Calu3 (cell line): ENCODE measurements at regions of chr2 and their contacts with region 1.

Region 1: GRCh38 chr2:152189622-152190495 is 14.3 kb upstream of the STAM2 start:
- DNase-seq: peak; percentile 55
- H3K4me3 Mint-ChIP-seq: no peak overlapping the region
- H3K27ac Mint-ChIP-seq: no peak overlapping the region
- H3K4me1 Mint-ChIP-seq: peaks cover 9% of the 10 kb centered on the region
- H3K27me3 Mint-ChIP-seq: no peaks in the 10 kb centered on the region
- CTCF ChIP-seq: peak; percentile 41

Region 2: GRCh38 chr2:152485954-152486736 is 296.3 kb after region 1 on chr2:
- CTCF ChIA-PET with region 1: no interaction called
- intact Hi-C with region 1: loop called (anchors 5 kb)
- DNase-seq: peak; percentile 52
- H3K4me3 Mint-ChIP-seq: peak overlapping the region; percentile 13
- H3K27ac Mint-ChIP-seq: peak overlapping the region; percentile 60
- H3K4me1 Mint-ChIP-seq: peaks cover 65% of the 10 kb centered on the region
- H3K27me3 Mint-ChIP-seq: no peaks in the 10 kb centered on the region
- CTCF ChIP-seq: no peak

Region 3: DNA sequence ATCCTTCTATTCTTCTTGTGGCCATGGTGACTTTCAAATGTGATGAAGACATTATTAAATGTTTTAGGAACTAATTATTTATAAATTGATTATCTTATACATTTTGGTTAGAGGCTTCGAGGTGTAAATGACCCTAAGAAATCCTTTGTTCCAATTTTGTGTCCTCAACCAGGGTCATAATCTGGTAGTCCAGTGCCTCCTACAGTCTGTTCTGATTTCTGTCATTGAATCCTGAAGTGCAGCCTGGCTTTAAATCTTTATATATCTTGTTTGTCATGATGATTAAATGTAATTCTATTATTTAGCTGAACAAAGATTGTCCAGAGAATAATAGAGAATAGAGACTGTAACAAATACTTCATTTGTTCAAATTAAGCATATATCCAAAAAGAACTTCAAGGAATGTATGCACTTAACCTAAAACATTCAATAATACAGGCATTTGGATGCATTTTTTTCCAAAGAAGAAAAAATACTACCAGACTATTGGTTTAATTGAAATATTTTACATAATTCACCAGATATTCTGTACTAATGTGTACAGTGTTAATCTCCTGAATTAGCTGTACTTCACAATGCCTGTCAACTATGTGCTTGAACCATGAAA is 437.6 kb after region 1 on chr2:
- CTCF ChIA-PET with region 1: no interaction called
- intact Hi-C with region 1: loop called (anchors 2 kb)
- DNase-seq: peak; percentile 21
- H3K4me3 Mint-ChIP-seq: no peak overlapping the region
- H3K27ac Mint-ChIP-seq: no peak overlapping the region
- H3K4me1 Mint-ChIP-seq: no peaks in the 10 kb centered on the region
- H3K27me3 Mint-ChIP-seq: no peaks in the 10 kb centered on the region
- CTCF ChIP-seq: no peak